ENCODE measurements at regions of chr2 and their contacts with region 1.

Region 1: DNA sequence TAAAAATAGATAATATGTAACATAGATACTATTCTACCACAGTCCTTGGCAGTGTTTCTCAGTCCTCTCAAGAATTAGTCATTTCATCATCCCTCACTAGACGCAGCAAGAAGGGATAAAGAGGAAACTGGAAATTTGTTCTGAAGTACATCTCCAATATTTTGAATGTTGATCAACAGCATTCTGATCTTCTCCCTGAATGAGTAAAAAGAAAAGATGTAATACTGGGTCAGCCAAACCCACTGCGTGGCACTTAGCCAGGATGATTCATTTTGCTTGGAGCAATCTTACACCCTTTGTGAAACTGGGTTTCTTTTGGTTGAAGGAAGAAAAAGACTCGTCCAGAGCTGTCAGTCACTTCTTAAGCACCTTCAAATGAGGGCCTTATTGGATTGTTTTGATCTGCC is 54.1 kb downstream of the TAF1B start:
- DNase-seq: peak; percentile 90
- ATAC-seq: peak; percentile 98
- H3K4me3 Mint-ChIP-seq: no peak overlapping the region
- H3K27ac Mint-ChIP-seq: no peak overlapping the region
- H3K4me1 Mint-ChIP-seq: peaks cover 27% of the 10 kb centered on the region
- H3K27me3 Mint-ChIP-seq: no peaks in the 10 kb centered on the region

Region 2: DNA sequence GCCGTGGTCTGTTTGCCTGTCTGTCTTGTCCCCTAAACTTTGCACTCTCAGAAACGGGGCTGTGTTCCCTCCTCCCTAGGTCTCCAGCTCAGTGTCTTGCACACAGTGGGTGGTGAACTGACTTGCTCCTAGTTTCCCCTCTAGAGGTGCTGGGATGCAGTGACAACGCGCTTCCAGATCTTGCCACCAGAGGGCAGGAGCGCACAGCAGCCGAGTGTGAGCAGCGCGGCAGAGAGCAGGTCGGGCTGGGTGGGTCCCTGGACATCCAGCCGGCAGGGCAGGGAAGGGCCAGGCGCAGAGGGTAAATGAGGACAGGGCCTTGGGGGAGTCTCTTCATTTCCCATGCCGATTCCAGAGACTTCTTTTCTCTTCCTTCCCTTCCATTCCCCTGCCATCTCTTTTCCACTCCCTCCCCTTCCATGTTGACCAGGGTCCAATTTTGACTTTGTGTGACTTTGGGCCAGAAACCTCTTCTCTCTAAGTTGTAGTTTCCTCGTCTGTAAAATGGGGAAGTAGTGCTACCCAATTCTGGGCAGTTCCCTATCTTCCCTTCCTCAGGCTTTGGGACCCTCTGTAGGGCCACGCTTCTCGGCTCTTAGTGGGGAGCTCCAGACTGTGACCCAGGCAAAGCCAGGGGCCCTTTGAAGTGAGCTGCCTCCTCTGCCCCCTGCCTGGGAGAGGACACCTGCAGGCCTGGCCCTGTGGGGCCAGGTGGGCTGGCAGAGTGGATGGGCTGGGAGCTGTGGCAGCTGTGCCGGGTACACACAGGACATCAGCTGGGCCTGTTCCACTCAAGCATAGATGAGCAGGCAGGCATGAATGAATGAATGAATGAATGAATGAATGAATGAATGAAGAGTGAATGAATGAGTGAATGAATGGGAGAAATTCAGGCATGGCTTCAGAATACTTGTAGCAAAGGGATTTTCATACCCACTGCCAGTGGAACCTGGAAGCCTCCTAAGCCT is 97.4 kb before region 1 on chr2:
- CTCF ChIA-PET with region 1: no interaction called
- POLR2A ChIA-PET with region 1: no interaction called
- intact Hi-C with region 1: no loop called
- DNase-seq: peak; percentile 93
- ATAC-seq: peak; percentile 92
- H3K4me3 Mint-ChIP-seq: peak overlapping the region; percentile 39
- H3K27ac Mint-ChIP-seq: peak overlapping the region; percentile 86
- H3K4me1 Mint-ChIP-seq: peaks cover 24% of the 10 kb centered on the region
- H3K27me3 Mint-ChIP-seq: peaks cover 2% of the 10 kb centered on the region

Region 3: DNA sequence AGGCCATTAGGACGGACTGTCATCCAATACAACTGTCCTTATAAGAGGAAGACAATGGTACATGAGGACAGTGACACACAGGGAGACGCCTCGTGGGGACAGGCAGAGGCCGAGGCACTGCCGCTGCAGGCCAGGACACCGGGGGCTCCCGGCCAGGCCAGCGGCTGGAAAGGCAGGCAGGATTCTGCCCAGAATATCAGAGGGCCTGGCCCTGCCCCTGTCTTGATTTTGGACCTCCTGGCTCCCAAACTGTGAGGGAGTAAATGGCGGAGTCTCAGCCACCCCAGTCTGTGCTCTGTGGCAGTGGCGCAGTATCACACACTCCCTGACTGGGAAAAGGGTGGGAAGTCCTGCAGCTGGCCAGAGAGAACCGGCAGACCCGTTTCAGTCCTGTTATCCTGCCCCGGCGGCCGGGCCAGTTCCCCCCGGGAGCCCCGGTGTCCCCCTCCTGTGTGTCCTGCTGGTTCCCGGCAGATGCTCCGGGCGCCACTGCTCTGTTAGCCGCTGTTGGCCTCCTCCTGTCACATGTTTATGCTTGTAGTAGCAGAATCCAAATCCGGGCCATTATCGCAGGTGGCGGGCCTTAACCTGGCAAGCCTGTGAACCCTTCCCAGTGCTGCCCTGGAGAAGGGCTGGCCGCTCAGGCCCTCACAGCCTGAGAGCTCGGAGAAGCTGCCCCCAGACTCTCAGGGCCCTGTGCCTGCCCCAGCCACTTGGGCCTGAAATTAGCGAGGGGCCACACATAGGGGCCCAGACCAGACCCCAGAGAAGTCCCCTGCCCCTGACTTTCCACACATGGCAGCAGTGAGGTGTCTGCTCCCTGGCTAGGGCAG is 85.4 kb before region 1 on chr2:
- CTCF ChIA-PET with region 1: no interaction called
- POLR2A ChIA-PET with region 1: no interaction called
- intact Hi-C with region 1: no loop called
- DNase-seq: no peak
- ATAC-seq: no peak
- H3K4me3 Mint-ChIP-seq: no peak overlapping the region
- H3K27ac Mint-ChIP-seq: no peak overlapping the region
- H3K4me1 Mint-ChIP-seq: peaks cover 7% of the 10 kb centered on the region
- H3K27me3 Mint-ChIP-seq: peaks cover 3% of the 10 kb centered on the region

Region 4: DNA sequence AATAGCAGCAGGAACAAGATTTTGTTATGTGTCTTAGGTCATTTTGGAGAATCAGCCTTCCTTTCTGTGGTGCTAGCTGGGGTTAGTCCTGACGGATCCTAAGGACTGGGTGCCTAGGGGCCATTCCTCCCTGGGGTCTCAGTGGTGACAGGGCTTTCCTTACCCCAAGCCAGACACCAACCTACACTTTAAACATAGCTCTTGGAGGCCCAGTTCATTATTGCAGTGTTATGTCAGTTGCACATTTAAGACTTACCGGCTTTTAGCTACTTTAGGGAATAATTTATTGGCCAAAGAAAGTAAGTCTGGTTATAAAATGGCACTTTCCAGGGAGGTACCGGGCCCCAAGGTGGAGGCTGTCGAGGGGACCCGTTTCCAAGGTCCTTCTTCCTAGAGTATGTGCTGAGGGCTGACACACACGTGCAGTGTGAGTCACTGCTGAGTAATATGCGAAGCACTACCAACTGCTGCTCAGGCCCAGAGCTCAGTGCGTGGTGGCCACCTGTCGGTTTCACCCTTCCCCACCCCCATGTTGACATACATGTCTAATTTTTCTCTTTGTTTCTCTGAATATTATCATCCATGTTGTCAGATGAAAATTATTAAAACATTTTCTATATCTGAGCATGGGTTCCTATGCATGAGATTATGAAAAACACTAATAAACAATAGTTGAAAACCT is 17.2 kb after region 1 on chr2:
- CTCF ChIA-PET with region 1: interaction called, 6 read pairs
- POLR2A ChIA-PET with region 1: no interaction called
- intact Hi-C with region 1: loop called in 1 of 2 experiments (anchors 2 kb)
- DNase-seq: peak; percentile 79
- ATAC-seq: peak; percentile 100
- H3K4me3 Mint-ChIP-seq: no peak overlapping the region
- H3K27ac Mint-ChIP-seq: no peak overlapping the region
- H3K4me1 Mint-ChIP-seq: peaks cover 10% of the 10 kb centered on the region
- H3K27me3 Mint-ChIP-seq: no peaks in the 10 kb centered on the region

Measured in activated CD4-positive, alpha-beta T cell treated with anti-CD3 and anti-CD28 coated beads for 36 hours (primary cell).